Naive thymus-derived CD4-positive, alpha-beta T cell (primary cell): ENCODE measurements at regions of chr1 and their contacts with region 1.

Region 1: DNA sequence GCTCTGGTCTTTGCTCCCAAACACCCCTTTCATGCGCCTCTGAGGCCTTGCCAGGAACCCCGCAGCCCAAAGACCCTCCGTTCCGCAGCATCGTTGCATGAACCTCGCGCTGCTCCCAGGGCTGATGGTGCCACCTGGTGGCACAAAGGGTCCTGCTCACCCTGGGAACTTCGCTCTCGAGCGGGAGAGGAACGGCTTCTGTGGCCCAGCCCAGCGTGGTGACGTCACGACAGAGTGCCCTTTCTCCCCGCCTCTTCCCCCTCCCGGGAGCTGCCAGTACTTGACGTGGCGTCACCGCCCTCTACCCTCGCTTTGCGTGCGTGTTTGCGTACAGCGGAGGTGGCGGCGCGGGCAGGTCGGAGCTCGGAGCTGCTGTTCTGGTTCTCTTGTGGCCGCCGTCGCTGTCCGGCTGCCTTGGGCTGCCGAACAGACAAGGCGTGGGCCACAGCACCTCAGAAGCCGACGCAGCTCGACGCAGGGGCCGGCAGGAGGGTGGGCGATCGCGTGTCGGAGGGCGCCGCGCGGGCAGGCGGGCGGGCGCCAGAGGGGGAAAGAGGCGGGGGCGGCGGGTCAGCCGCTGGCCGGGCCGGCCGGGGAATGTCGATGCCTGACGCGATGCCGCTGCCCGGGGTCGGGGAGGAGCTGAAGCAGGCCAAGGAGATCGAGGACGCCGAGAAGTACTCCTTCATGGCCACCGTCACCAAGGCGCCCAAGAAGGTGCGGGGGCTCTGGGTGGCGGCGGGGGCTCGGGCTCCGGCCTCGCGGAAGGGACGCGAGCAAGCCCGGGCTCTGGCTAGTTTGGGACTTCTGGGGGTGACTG is at the start of gene AHCYL1:
- DNase-seq: peak; percentile 97 to 99 (median 99)
- ATAC-seq: peak; percentile 99
- H3K4me3 ChIP-seq: peak within 1 kb of the TSS; percentile 72
- H3K4me3 Mint-ChIP-seq: peak within 1 kb of the TSS; percentile 87 to 100 (median 97)
- H3K27ac ChIP-seq: peak within 1 kb of the TSS; percentile 92
- H3K27ac Mint-ChIP-seq: peak within 1 kb of the TSS; percentile 94 to 99 (median 98)
- H3K4me1 ChIP-seq: peaks cover 22 to 24% of the 10 kb centered on the region in 2 donors
- H3K4me1 Mint-ChIP-seq: peaks cover 22 to 49% (median 42%) of the 10 kb centered on the region in 7 donors
- H3K27me3 ChIP-seq: no peaks in the 10 kb centered on the region
- H3K27me3 Mint-ChIP-seq: peaks cover 0 to 6% (median 0%) of the 10 kb centered on the region in 5 donors
- total RNA-seq, gene AHCYL1: 16.6 to 60.1 (median 37.1) TPM

Region 2: GRCh38 chr1:109620841-109621286 is 363.8 kb before region 1 on chr1:
- CTCF ChIA-PET with region 1: interaction called, 3 read pairs
- POLR2A ChIA-PET with region 1: no interaction called
- intact Hi-C with region 1: loop called (anchors 1 kb)
- DNase-seq: peak; percentile 92 to 98 (median 95)
- ATAC-seq: peak; percentile 90
- H3K4me3 ChIP-seq: peak overlapping the region; percentile 78
- H3K4me3 Mint-ChIP-seq: peak overlapping the region; percentile 90 to 98 (median 94)
- H3K27ac ChIP-seq: peak overlapping the region; percentile 90
- H3K27ac Mint-ChIP-seq: peak overlapping the region; percentile 92 to 98 (median 96)
- H3K4me1 ChIP-seq: peaks cover 14 to 43% of the 10 kb centered on the region in 2 donors
- H3K4me1 Mint-ChIP-seq: peaks cover 52 to 79% (median 68%) of the 10 kb centered on the region in 7 donors
- H3K27me3 ChIP-seq: no peaks in the 10 kb centered on the region
- H3K27me3 Mint-ChIP-seq: no peaks in the 10 kb centered on the region

Region 3: DNA sequence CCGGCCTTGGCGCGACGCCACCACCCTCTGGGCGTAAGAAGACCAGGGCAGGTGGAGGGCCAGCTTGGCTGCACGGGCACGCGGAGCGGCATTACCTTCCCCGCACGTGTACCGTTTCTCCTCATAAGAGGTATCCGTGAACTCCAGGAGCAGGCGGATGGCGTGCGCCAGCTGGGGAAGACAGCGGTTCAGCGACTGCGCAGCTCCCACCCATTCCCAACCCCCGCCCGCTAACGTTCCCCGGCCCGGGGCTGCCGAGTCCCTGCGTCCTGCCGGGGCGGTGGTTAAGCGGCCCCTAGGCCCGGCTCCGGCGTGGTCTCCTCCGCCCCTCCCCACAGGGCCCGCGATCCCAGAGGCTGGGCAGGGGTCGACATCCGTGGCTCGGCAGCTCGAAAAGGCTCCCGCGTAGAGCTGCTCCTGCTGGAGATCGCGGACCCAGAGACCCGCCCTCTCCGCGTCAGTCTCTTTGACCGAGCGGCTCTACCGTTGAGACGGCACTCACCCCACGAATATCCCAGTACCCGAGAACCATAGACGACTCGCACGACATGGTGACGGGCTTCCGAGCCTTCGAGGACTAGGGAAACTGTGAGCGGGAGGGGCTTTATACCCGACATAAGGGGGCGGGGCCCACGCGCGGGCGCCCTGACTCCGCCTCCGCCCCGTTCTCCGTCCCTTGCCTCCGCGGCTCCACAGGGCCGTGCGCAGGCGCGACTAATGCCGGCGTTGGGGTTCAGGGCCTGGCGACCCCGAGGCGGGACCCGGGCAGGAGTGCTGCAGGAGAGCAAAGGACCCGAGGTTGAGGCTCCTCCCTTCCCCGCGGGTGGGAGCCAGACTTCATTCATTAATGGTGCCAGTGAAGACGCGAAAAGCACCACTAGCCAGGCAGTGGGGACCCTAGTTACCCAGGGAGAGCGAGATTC is 244.7 kb before region 1 on chr1:
- CTCF ChIA-PET with region 1: interaction called, 6 read pairs
- POLR2A ChIA-PET with region 1: no interaction called
- intact Hi-C with region 1: loop called (anchors 1 kb)
- DNase-seq: peak; percentile 73 to 87 (median 85)
- ATAC-seq: peak; percentile 99
- H3K4me3 ChIP-seq: peak overlapping the region; percentile 70
- H3K4me3 Mint-ChIP-seq: peak overlapping the region; percentile 71 to 93 (median 87)
- H3K27ac ChIP-seq: peak overlapping the region; percentile 81
- H3K27ac Mint-ChIP-seq: peak overlapping the region; percentile 17 to 95 (median 72)
- H3K4me1 ChIP-seq: peaks cover 0 to 11% of the 10 kb centered on the region in 2 donors
- H3K4me1 Mint-ChIP-seq: peaks cover 3 to 21% (median 13%) of the 10 kb centered on the region in 7 donors
- H3K27me3 ChIP-seq: no peaks in the 10 kb centered on the region
- H3K27me3 Mint-ChIP-seq: peaks cover 0 to 51% (median 0%) of the 10 kb centered on the region in 5 donors

Region 4: DNA sequence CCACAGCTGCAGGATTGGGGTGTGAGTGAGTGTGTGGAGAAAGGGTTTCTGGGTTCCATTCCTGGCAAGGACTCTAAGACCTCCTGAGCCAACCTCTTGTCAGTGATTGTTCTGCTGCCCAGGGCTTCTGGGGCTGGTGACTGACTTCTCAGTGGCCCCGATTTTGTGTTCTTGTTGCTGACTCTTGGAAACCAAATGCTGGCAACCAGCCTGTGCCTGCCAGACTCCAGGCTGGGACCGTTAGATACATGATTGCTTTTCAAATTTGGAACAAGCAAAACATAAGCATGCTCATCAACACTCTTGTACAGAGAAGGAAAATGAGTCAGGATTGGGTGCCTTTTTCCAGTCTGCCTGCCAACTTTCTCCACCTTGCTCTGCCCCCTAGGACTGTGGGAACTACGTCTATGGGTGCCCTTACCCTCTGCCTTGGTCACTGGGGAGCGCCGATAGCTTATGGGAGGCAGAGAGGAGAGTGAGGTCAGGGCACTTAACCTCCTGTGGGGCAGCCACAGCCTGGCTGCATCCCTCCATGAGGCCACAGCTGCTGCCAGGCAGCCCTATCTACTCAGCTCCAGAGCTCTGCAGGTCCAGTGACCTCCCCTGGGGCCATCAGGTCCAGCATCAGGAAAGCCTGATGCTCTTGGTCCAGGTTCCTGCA is 181.6 kb before region 1 on chr1:
- CTCF ChIA-PET with region 1: interaction called, 13 read pairs
- POLR2A ChIA-PET with region 1: interaction called, 3 read pairs
- intact Hi-C with region 1: loop called (anchors 1 kb)
- DNase-seq: no peak
- ATAC-seq: no peak
- H3K4me3 ChIP-seq: peak overlapping the region; percentile 46
- H3K4me3 Mint-ChIP-seq: peak overlapping the region; percentile 44 to 85 (median 80)
- H3K27ac ChIP-seq: peak overlapping the region; percentile 28
- H3K27ac Mint-ChIP-seq: peak overlapping the region; percentile 84 to 98 (median 94)
- H3K4me1 ChIP-seq: peaks cover 42 to 62% of the 10 kb centered on the region in 2 donors
- H3K4me1 Mint-ChIP-seq: peaks cover 51 to 84% (median 79%) of the 10 kb centered on the region in 7 donors
- H3K27me3 ChIP-seq: no peaks in the 10 kb centered on the region
- H3K27me3 Mint-ChIP-seq: no peaks in the 10 kb centered on the region

Region 5: GRCh38 chr1:109959974-109960744 is 24.5 kb before region 1 on chr1:
- CTCF ChIA-PET with region 1: interaction called, 10 read pairs
- POLR2A ChIA-PET with region 1: no interaction called
- intact Hi-C with region 1: no loop called
- DNase-seq: no peak
- ATAC-seq: no peak
- H3K4me3 ChIP-seq: no peak overlapping the region
- H3K4me3 Mint-ChIP-seq: no peak overlapping the region
- H3K27ac ChIP-seq: no peak overlapping the region
- H3K27ac Mint-ChIP-seq: no peak overlapping the region
- H3K4me1 ChIP-seq: no peaks in the 10 kb centered on the region
- H3K4me1 Mint-ChIP-seq: peaks cover 0 to 5% (median 0%) of the 10 kb centered on the region in 7 donors
- H3K27me3 ChIP-seq: no peaks in the 10 kb centered on the region
- H3K27me3 Mint-ChIP-seq: peaks cover 9 to 42% (median 18%) of the 10 kb centered on the region in 5 donors